Adrenal gland (tissue), 19 donors: ENCODE measurements at regions of chr2 and their contacts with region 1.

Region 1: DNA sequence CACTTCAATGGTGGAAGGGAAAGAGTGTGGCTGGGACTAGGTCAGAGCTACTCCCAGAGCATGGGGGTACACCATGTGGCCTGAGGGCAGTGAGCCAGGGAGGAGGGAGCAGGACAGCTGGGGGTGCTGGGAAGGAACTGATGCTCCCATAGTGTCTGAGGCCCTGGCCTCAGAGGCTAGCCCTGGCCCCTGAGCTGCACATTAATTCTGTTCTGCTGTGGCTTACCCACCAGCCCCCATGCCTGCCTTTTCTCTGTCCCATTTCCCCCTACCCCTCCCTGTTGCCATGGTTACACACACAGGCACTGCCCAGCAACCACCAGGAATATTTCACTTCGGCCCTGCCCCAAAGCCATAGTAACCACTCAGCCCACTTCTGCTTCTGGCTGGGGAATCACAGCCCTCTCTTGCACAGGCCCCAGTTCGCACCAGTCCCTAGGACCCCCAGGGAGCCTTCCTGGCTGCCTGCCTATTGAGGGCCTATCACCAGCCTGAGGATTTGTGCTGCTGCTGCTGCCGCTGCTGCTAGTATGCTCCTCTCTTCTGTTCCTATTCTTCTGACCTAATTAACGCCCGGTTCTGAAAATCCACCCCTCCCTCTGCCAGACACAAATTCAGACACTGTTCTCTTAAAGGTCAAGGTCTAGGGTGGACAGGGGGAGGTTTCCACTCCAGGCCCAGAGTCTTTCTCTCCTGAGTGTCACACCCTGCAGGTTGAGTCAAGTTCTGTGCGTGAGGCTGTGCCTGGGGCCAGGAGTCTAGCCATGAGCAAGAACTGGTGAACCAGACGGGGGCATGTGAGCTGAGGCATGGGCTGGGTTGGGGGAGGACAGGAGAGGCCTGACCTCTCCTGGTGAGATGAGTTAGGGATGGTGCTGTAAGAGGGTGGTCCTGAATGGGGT is 87.1 kb upstream of the MCFD2 start:
- DNase-seq: peak in 6 of 7 donors; percentile 66 to 88 (median 86)
- H3K4me3 ChIP-seq: no peak overlapping the region
- H3K27ac ChIP-seq: peak overlapping the region in 4 of 5 donors; percentile 62 to 88 (median 74)
- H3K4me1 ChIP-seq: peaks cover 27 to 60% of the 10 kb centered on the region in 2 donors
- H3K27me3 ChIP-seq: no peaks in the 10 kb centered on the region
- CTCF ChIP-seq: no peak
- POLR2A ChIP-seq: peak in 1 of 2 donors; percentile 51

Region 2: GRCh38 chr2:46887028-46887885 is 115.5 kb before region 1 on chr2:
- intact Hi-C with region 1: no loop called
- DNase-seq: no peak
- H3K4me3 ChIP-seq: no peak overlapping the region
- H3K27ac ChIP-seq: no peak overlapping the region
- H3K4me1 ChIP-seq: no peaks in the 10 kb centered on the region
- H3K27me3 ChIP-seq: no peaks in the 10 kb centered on the region
- CTCF ChIP-seq: no peak
- POLR2A ChIP-seq: no peak

Region 3: DNA sequence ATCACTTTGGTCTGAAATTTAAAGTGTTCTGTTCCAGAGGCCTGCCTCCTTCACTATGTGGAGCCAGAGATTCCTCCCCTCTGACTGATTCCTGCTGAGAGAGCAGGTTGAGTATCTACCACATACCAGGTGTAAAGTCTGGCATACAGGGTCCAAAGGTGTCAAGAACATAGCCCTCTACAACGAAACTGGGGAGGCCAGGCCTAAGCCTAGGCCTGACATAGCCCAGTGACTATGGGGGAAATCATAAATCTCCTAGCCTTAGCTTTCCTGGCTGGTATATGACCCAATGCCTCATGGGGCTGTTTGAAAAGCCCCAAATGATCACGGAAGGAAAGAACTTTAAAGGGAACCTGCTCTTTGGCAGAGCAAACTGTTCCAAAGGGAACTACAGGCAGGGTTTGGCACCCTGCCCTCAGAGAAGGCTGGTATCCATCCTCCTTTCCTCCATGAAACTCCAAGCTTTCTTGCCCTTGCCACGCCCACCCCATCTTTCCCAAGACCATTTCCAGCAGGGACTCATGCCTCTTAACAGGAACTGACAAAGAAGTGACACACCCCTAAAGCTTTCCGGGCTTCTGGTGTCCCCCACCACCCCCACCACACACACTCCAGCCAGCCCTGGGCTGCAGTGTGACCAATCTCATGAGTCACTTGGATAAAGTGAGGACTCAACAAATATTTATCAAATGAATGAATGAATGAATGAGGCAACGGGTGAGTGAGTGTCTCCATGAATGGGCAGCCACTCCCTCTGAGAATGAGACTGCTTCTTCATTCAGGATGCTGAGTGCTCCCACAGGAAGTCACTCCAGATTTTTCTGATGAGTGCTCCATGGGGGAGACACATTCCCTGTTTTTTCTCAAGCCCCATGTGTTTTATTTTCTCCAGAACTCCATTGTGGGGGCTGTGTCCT is 266.8 kb after region 1 on chr2:
- intact Hi-C with region 1: loop called in 1 of 2 experiments (anchors 10 kb)
- DNase-seq: peak; percentile 32 to 90 (median 76)
- H3K4me3 ChIP-seq: no peak overlapping the region
- H3K27ac ChIP-seq: peak overlapping the region; percentile 31 to 86 (median 78)
- H3K4me1 ChIP-seq: peaks cover 23 to 38% of the 10 kb centered on the region in 2 donors
- H3K27me3 ChIP-seq: no peaks in the 10 kb centered on the region
- CTCF ChIP-seq: no peak
- POLR2A ChIP-seq: no peak

Region 4: GRCh38 chr2:47309952-47310800 is 307.4 kb after region 1 on chr2:
- intact Hi-C with region 1: no loop called
- DNase-seq: no peak
- H3K4me3 ChIP-seq: no peak overlapping the region
- H3K27ac ChIP-seq: peak overlapping the region in 1 of 5 donors; percentile 17
- H3K4me1 ChIP-seq: peaks cover 0 to 4% of the 10 kb centered on the region in 2 donors
- H3K27me3 ChIP-seq: no peaks in the 10 kb centered on the region
- CTCF ChIP-seq: no peak
- POLR2A ChIP-seq: no peak

Region 5: GRCh38 chr2:47404356-47404755 is 401.6 kb after region 1 on chr2:
- intact Hi-C with region 1: no loop called
- DNase-seq: no peak
- H3K4me3 ChIP-seq: no peak overlapping the region
- H3K27ac ChIP-seq: no peak overlapping the region
- H3K4me1 ChIP-seq: peaks cover 11 to 13% of the 10 kb centered on the region in 2 donors
- H3K27me3 ChIP-seq: no peaks in the 10 kb centered on the region
- CTCF ChIP-seq: no peak
- POLR2A ChIP-seq: no peak